A673 (cell line): ENCODE measurements at regions of chr5 and their contacts with region 1.

Region 1: GRCh38 chr5:138464008-138464387 is 1.3 kb upstream of the EGR1 start:
- DNase-seq: peak; percentile 98
- H3K4me3 ChIP-seq: peak overlapping the region; percentile 86
- H3K27ac ChIP-seq: peak overlapping the region; percentile 100
- H3K4me1 ChIP-seq: peaks cover 13% of the 10 kb centered on the region
- H3K27me3 ChIP-seq: no peaks in the 10 kb centered on the region
- CTCF ChIP-seq: peak; percentile 92

Region 2: DNA sequence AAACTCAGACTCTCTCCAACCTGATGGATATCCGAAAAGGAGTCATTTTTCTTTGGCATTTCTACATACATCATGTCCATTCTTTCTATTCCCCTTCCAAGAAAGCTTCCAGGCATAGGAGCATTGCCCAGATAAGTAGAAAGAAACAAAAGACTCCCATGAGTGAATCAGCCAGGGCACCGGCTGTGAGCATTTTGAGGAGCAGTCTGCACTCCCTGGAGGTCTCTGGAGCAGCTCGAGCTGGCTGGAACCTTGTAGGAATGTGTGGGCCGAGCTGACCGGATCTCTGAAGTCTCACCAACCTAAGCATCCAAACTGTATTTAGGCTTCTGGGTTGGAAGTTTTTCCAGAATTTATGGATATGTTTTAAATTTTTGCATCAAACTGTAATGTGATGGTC is 1937.2 kb before region 1 on chr5:
- CTCF ChIA-PET with region 1: no interaction called
- POLR2A ChIA-PET with region 1: no interaction called
- intact Hi-C with region 1: no loop called
- DNase-seq: no peak
- H3K4me3 ChIP-seq: no peak overlapping the region
- H3K27ac ChIP-seq: no peak overlapping the region
- H3K4me1 ChIP-seq: no peaks in the 10 kb centered on the region
- H3K27me3 ChIP-seq: peaks cover 30% of the 10 kb centered on the region
- CTCF ChIP-seq: no peak

Region 3: GRCh38 chr5:138482638-138483037 is 18.6 kb after region 1 on chr5:
- CTCF ChIA-PET with region 1: no interaction called
- POLR2A ChIA-PET with region 1: interaction called, 16 read pairs
- intact Hi-C with region 1: no loop called
- DNase-seq: no peak
- H3K4me3 ChIP-seq: no peak overlapping the region
- H3K27ac ChIP-seq: no peak overlapping the region
- H3K4me1 ChIP-seq: no peaks in the 10 kb centered on the region
- H3K27me3 ChIP-seq: no peaks in the 10 kb centered on the region
- CTCF ChIP-seq: no peak

Region 4: DNA sequence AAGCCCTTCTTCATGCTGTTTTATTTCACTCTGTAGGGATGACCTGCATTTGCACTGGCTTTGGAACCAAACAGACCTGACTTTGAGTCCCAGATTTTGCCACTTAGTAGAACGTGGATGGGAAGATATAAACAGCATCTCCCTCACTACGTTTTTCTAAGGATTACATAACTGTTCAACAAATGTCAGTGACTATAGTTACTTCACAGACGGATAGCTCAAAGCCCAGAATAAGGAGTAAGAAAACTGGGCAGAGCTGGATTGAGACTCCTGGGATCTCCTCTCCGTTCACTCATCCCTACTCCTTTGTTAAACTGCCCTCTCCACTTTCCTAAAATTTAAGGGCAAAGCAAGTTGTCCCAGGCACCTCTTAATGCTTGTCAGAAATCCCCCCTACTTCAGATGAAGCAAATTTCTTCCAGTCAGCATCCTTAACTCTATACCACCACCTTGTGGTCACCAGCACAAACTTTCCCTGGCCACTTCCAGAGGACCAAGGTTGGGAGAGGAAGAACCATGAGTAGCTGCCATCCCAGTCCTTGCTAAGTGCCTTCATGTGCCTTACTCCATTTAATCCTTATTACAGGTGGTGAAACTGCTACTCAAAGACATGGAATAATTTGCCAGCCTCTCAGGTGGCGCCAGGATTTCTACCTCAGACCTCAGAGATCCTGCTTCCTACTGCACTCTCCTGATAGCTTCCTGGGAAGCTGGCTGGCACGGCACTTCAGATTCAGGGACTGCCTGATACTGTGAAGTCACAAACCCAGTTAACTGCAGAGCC is 39.7 kb after region 1 on chr5:
- CTCF ChIA-PET with region 1: interaction called, 6 read pairs
- POLR2A ChIA-PET with region 1: interaction called, 17 read pairs
- intact Hi-C with region 1: loop called (anchors 1 kb)
- DNase-seq: peak; percentile 80
- H3K4me3 ChIP-seq: no peak overlapping the region
- H3K27ac ChIP-seq: no peak overlapping the region
- H3K4me1 ChIP-seq: peaks cover 12% of the 10 kb centered on the region
- H3K27me3 ChIP-seq: no peaks in the 10 kb centered on the region
- CTCF ChIP-seq: peak; percentile 79

Region 5: DNA sequence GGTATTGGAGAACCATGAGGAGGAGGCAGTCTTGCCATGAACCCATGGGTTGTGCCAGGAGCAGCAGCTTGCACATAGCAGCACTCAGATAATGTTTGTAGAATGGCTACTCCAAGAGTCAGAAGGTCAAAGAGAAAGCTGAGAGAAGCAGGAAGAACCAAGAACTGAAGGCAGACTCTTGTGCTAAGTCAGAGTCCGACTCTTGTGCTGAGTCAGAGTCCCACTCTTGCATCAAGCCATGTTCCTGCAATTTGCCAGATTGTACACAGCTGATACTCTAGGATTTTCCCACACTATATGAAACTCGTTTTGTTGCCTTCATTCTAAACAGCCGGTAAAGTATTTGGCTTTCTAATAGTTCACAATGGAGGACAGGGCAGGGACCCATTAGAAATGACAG is 137.4 kb after region 1 on chr5:
- CTCF ChIA-PET with region 1: no interaction called
- POLR2A ChIA-PET with region 1: interaction called, 19 read pairs
- intact Hi-C with region 1: no loop called
- DNase-seq: no peak
- H3K4me3 ChIP-seq: no peak overlapping the region
- H3K27ac ChIP-seq: no peak overlapping the region
- H3K4me1 ChIP-seq: peaks cover 2% of the 10 kb centered on the region
- H3K27me3 ChIP-seq: no peaks in the 10 kb centered on the region
- CTCF ChIP-seq: no peak